Astrocyte of the cerebellum (primary cell): ENCODE measurements at regions of chr21 and their contacts with region 1.

Region 1: DNA sequence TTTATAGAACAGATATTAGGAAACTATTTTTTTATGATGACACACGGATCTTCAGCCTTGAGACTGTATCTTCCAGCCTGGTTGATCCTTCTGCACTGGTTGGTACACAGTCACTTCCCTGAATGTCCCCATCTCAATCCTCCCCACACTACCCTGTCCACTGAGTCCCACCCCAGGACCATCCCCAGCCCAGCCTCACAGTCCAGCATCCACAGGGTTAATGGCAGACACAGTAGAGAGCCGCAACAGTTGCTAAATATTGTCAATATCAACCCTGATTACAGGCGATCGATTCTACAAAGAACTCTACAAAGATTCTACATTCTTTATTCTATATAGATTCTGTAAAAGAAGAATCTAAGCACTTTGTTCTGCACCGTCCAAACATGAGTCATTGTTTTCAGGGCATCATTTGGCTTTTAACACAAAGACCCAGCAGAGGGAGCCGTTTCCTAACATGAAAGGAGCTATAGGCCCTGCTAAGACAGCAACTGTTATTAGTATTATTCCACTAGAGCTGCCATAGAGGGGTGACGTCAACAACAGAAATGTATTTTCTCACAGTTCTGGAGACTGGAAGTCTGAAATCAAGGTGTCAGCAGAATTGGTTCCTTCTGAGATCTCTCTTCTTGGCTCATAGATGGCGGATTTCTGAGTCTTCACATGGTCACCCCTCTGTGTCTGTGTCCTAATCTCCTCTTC is 30.1 kb upstream of the IFNAR2 start:
- DNase-seq: peak; percentile 94
- H3K4me3 ChIP-seq: no peak overlapping the region
- CTCF ChIP-seq: peak; percentile 70

Region 2: GRCh38 chr21:32826329-32827167 is 373.1 kb before region 1 on chr21:
- in situ Hi-C with region 1: loop called (anchors 10 kb)
- DNase-seq: peak; percentile 35
- H3K4me3 ChIP-seq: no peak overlapping the region
- CTCF ChIP-seq: peak; percentile 68

Region 3: DNA sequence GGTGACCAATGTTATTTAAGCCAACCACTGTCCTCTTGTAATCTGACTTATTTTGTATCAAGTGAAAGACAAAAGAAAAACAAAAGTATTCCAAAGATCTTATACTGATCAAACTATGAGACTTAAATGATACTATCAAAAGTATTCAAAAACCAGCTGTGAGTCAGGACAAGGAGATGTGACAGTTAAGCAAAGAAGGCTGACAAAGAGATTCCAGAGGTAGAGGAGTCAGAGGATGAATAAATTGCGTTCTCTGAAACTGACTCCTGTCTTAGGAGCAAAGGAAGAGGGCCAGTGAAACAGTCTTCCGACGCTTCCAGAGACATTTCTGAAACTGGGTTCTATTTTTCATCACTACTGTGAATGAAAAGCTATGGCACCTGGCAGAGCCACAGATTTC is 259.2 kb after region 1 on chr21:
- in situ Hi-C with region 1: no loop called
- DNase-seq: no peak
- H3K4me3 ChIP-seq: no peak overlapping the region
- CTCF ChIP-seq: no peak